ENCODE measurements at regions of chr2 and their contacts with region 1.

Region 1: DNA sequence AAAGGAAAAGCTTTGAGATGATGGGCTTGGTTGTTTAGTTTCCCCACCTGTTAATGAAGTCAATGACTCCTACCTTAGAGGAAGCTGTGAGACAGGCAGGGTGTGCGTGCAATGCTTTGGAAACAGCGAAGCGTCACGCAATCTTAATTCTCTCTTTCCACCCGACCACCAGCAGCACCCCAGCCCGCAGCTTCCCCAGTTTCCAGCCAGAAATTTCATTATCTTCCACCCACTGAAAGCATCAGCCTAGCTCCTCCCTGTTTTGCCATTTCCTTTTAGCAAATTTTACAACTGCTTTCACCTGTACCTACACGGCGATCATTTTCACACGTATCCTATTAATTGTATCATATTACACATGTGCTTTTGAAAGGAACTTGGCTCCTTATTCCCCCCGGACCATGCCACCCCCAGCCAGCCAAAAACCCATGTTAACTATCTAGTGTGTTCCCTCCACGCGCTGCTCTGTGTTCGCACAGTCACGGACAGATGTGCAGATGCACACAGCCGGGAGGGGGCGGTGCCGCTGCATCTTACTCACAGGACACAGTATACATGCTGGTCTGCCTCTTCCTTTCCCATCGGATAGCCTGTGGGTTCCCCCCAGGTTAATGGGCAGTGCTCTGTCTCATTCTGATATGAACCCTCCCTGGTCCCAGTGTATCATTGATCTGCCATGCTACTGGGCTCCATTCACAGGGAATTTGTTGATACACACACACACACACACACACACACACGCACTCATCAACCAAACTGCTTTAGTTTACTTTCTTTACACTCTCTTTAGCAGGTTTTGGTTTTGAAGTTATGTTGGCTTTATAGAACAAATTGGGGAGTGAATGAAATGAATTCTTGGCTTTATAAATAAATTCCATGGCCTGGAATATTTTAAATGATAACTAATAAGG is 22.4 kb downstream of the CYP27C1 start:
- DNase-seq: peak; percentile 65 to 84
- ATAC-seq: peak; percentile 73 to 84 (median 80)
- H3K4me3 ChIP-seq: no peak overlapping the region
- H3K27ac ChIP-seq: no peak overlapping the region
- H3K4me1 ChIP-seq: peaks cover 12% of the 10 kb centered on the region
- H3K27me3 ChIP-seq: no peaks in the 10 kb centered on the region
- CTCF ChIP-seq: peak; percentile 53

Region 2: GRCh38 chr2:127217485-127218321 is 20.0 kb after region 1 on chr2:
- intact Hi-C with region 1: loop called in 1 of 2 experiments (anchors 1 kb)
- DNase-seq: no peak
- ATAC-seq: no peak
- H3K4me3 ChIP-seq: no peak overlapping the region
- H3K27ac ChIP-seq: no peak overlapping the region
- H3K4me1 ChIP-seq: peaks cover 8% of the 10 kb centered on the region
- H3K27me3 ChIP-seq: peaks cover 0 to 44% (median 9%) of the 10 kb centered on the region in 3 donors
- CTCF ChIP-seq: no peak

Region 3: DNA sequence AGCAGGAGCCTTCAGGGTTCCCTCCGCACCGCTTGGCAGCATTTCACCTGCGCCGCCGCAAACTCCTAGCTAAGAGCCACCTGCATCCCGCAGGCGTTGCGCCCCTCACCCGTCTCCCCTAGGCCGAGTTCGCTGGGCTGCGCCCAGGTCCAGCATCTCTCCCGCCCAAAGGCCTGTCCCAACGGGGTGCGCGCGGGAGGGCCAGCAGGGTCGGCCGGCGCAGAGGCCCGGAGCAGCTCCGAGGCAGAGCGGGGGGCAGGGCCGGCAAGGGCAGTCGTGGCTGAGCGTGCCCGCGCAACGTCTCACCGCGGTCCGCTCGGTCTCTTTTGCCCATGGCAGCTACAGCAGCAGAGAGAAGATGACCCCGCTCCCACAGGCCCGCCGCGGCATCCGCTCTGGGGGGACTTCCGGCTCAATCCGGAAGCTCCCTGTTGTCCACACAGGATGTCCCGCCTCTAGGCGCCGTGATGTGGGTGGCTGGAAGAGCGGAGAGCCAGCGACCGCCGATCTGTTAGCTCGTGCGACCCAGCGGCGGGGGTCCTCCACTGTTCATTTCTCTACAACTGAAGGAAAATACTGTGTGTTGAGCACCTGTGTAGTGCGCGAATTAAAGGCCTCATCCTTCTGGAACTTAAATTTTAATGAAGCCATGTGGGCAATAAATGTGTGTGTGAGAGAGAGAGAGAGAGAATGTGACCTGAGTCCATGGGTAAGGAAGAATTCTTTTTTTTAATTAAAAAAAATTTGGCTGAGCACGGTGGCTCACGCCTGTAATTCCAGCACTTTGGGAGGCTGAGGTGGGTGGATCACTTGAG is 96.2 kb after region 1 on chr2 and contains the start of gene ERCC3:
- intact Hi-C with region 1: loop called in 1 of 2 experiments (anchors 5 kb)
- DNase-seq: peak; percentile 87 to 93
- ATAC-seq: peak; percentile 94 to 98 (median 96)
- H3K4me3 ChIP-seq: peak within 1 kb of the TSS; percentile 93
- H3K27ac ChIP-seq: peak within 1 kb of the TSS; percentile 86
- H3K4me1 ChIP-seq: peaks cover 10% of the 10 kb centered on the region
- H3K27me3 ChIP-seq: no peaks in the 10 kb centered on the region
- CTCF ChIP-seq: no peak
- total RNA-seq, gene ERCC3: 28.2 to 31.2 (median 29.2) TPM

Region 4: GRCh38 chr2:127479866-127480743 is 282.4 kb after region 1 on chr2:
- intact Hi-C with region 1: loop called in 1 of 2 experiments (anchors 5 kb)
- DNase-seq: no peak
- ATAC-seq: peak in 2 of 4 donors; percentile 20 to 44
- H3K4me3 ChIP-seq: no peak overlapping the region
- H3K27ac ChIP-seq: no peak overlapping the region
- H3K4me1 ChIP-seq: no peaks in the 10 kb centered on the region
- H3K27me3 ChIP-seq: no peaks in the 10 kb centered on the region
- CTCF ChIP-seq: no peak